Activated CD4-positive, alpha-beta T cell treated with anti-CD3 and anti-CD28 coated beads, Interleukin-2, amount 10 ng/mL, durations not matched to agents 24 days and 14 days (primary cell): ENCODE measurements at regions of chr14 and their contacts with region 1.

Region 1: GRCh38 chr14:77457522-77458290 is at the starts of genes AHSA1 and VIPAS39:
- DNase-seq: peak; percentile 98
- H3K4me3 Mint-ChIP-seq: peak within 1 kb of the TSS; percentile 100
- H3K27ac Mint-ChIP-seq: peak within 1 kb of the TSS; percentile 100
- H3K4me1 Mint-ChIP-seq: peaks cover 27% of the 10 kb centered on the region
- H3K27me3 Mint-ChIP-seq: no peaks in the 10 kb centered on the region
- total RNA-seq, gene AHSA1: 418 and 441 TPM in 2 replicates
- total RNA-seq, gene VIPAS39: 17.7 and 18.5 TPM in 2 replicates

Region 2: DNA sequence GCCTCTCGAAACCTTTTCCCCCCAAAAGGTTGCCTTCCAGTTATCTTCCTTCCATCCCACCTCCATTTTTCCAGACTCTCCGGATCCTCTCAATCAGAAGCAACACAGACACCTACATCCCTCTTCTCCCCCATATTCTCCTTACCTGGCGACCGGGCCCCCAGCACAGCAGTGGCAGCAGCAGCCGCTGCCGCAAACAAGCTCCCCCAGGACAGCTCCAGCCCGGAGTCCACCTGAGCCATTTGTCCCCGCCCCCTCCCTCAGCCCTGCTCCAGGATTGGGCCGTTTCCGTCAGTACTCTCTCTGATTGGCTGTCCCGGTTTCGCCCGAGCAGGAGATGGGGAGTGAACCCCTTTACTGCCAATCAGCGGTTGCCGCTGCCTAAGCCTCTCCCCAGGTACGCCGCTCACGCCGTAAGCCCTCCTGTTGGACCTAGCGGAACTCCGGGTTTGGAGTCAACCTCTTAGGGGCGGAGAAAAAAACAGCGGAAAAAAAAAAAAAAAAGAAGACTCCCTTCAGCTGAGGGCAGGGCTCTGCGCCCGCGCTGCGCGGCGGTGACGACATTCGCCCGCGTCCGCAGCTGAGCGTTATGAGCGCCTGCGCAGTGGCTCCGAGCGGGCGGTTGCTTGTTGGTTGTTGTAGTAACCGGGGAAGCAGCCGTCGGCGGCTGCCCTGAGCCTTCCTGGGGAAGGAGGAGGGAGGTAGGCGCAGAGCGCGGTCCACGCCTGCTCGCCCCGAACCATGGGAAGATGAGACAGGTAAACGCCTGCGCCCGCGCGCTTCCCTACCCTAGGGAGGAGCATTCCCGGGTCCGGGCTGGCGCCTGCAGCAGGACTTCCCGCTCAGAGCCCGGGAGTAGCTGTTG is 1796.8 kb before region 1 on chr14 and contains the starts of genes ERG28 and TTLL5:
- intact Hi-C with region 1: loop called (anchors 10 kb)
- DNase-seq: peak; percentile 99
- H3K4me3 Mint-ChIP-seq: peak within 1 kb of the TSS; percentile 95
- H3K27ac Mint-ChIP-seq: peak within 1 kb of the TSS; percentile 92
- H3K4me1 Mint-ChIP-seq: peaks cover 21% of the 10 kb centered on the region
- H3K27me3 Mint-ChIP-seq: no peaks in the 10 kb centered on the region
- total RNA-seq, gene ERG28: 20.3 and 20.6 TPM in 2 replicates
- total RNA-seq, gene TTLL5: 31.7 and 35.5 TPM in 2 replicates

Region 3: DNA sequence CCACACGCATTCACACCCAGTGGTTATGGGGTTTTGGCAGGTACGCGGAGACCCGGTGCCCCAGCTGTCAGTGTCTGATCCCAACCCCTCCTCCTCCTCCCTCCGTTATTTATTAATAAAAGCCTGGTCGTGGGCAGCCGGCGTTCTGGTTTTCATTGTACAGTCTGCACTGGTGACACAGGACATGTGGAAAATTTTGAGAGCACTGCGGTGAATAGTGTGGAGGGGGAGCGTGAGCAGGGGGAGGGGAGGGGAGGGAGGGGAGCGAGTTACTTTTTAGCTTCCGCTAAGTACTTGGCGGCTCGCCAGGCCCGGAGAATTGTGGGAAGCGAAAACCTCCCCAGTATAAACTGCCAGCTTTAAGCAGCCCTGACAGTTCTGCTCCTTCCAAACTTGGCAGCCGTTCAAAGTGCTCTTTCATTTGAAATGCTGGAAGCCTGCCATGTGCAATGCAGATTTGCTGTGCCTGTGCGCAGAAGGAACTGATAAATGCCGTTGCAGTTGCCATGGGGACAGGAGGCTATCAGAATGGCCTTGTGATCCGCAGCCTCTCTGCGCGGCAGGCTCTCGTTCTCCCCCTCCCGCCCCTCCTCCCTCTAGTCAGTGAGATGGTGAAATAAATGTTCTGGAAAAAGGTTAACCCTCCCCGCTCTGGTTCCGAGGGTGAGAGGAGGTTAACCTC is 417.5 kb before region 1 on chr14:
- intact Hi-C with region 1: loop called (anchors 5 kb)
- DNase-seq: peak; percentile 97
- H3K4me3 Mint-ChIP-seq: peak overlapping the region; percentile 77
- H3K27ac Mint-ChIP-seq: peak overlapping the region; percentile 90
- H3K4me1 Mint-ChIP-seq: peaks cover 76% of the 10 kb centered on the region
- H3K27me3 Mint-ChIP-seq: no peaks in the 10 kb centered on the region

Region 4: DNA sequence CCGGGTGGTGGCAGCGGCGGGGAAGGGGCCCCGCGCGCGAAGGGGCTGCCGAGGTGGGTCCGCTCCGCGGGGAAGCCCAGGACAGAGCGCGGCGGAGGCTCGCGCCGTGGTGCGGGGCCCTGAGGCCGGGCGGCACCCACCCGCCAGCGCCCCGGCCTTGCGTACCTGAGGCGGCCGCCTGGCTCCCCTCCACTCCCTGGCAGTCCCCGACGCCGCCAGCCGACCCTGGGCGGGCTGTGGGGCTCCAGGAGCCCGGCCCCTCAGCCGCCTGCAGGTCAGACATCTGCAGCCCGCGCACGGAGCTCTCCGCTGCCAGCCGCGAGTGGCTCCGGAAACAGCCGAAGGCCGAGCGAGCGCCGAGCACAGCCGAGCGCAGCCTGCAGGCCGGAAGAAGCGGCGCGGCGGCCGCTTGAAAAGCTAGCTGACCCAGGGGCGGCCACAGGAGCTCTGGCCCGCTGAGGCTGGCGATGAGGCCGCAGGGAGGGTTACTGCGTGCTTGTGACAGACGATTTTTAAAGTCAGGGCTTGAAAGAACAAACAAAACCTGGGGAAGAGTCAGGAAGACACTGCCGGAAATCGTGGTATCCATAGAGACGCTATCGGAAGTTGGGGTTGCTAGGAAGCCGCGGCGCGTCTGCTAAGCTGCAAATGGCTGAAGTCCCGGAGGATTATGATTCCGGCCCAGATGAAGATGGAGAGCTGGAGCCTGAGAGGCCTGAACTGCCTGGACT is 80.8 kb before region 1 on chr14 and contains the starts of genes SAMD15 and TMED8:
- intact Hi-C with region 1: loop called (anchors 1 kb)
- DNase-seq: peak; percentile 95
- H3K4me3 Mint-ChIP-seq: peak within 1 kb of the TSS; percentile 93
- H3K27ac Mint-ChIP-seq: peak within 1 kb of the TSS; percentile 92
- H3K4me1 Mint-ChIP-seq: peaks cover 29% of the 10 kb centered on the region
- H3K27me3 Mint-ChIP-seq: peaks cover 16% of the 10 kb centered on the region
- total RNA-seq, gene SAMD15: 0.28 and 0.63 TPM in 2 replicates
- total RNA-seq, gene TMED8: 31.1 and 32.1 TPM in 2 replicates

Region 5: DNA sequence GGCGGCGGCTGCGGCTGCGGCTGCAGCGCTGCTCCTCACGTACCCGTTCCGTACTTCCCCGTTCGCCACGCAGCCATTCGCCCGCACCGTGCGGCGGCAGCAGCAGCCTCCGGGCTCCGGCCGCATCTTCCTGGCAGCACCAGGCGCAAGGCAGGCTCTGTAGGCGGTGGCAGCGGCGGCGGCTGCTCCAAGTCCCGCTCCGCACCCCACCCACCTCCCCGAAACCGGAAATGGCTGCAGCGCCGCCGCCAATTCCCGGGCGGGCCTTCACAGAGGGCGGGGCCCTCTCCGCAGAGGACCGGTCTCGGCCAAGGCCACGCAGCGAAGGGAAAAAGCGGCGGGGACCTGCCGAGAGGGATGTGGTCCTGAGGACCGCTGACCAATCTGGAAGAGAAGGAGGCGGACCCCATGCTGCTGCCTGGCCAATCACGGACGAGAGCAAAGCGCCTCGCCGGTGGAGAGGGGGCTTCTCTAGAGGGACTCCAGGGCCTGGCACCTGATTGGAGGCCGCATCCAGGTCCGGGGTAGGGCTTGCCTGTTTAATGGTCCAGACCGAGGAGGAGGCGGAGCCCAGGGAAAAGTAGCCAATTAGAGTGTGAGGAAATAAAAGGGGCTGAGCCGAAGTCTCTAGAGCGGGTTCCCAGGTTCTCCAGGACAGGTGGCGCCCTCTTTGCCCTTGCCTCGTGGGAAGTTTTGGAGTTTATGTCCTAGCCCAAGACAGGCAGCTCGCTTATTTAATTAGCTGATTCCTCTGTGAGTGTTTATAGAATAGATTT is 158.9 kb after region 1 on chr14 and contains the start of gene SPTLC2:
- intact Hi-C with region 1: loop called (anchors 2 kb)
- DNase-seq: peak; percentile 98
- H3K4me3 Mint-ChIP-seq: peak within 1 kb of the TSS; percentile 97
- H3K27ac Mint-ChIP-seq: peak within 1 kb of the TSS; percentile 94
- H3K4me1 Mint-ChIP-seq: peaks cover 42% of the 10 kb centered on the region
- H3K27me3 Mint-ChIP-seq: no peaks in the 10 kb centered on the region
- total RNA-seq, gene SPTLC2: 26.6 and 28.3 TPM in 2 replicates

Region 6: GRCh38 chr14:77760381-77761246 is 302.9 kb after region 1 on chr14 and contains the start of gene SNW1:
- intact Hi-C with region 1: loop called (anchors 1 kb)
- DNase-seq: peak; percentile 97
- H3K4me3 Mint-ChIP-seq: peak within 1 kb of the TSS; percentile 94
- H3K27ac Mint-ChIP-seq: peak within 1 kb of the TSS; percentile 99
- H3K4me1 Mint-ChIP-seq: peaks cover 25% of the 10 kb centered on the region
- H3K27me3 Mint-ChIP-seq: peaks cover 6% of the 10 kb centered on the region
- total RNA-seq, gene SNW1: 121 TPM in 2 replicates